ENCODE measurements at regions of chr15 and their contacts with region 1.

Region 1: GRCh38 chr15:75903331-75904239 is at the start of gene FBXO22:
- DNase-seq: peak; percentile 84 to 99 (median 90)

Region 2: DNA sequence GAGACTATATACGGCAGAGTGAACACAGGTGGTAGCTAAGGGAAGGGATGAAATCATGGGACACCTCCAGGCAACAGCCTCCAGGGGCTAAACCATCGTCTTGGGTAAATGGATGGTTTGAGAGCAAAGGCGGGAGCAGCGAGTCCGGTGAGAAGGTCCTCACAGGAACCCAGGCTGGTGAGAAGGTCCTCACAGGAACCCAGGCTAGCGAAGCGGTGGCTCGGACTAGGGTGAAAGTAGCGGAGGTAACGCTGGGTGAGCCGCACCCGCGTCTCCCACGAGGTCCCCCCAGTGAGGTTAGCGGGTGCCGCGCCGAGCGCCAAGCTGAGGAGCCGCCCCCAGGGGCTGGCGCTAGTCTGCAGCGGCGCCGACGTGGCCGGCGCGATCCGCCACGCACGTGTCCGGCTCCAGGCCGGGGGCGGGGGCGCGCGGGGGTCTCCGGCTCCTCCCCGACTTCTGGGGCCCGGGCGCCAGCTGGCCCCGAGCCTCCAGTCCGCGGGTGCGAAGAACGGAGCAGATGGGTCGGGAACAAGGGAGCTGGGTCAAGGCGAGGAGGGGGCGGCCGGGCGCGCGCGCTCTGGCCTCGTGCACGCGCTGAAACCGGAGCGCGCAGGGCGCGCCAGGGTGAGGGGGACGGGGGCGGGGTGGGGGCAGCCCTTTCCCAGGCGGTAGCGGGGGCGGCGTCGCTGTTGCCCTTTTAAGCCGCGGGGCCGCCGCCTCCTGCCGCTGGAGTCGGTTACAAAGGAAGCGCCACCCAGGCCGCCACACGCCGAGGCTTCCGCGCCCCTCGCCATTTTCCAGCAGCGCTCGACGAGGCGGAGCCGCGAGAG is 60.6 kb before region 1 on chr15 and contains the start of gene UBE2Q2:
- intact Hi-C with region 1: loop called (anchors 5 kb)
- DNase-seq: peak; percentile 32 to 91 (median 49)